ENCODE measurements at regions of chr2 and their contacts with region 1.

Region 1: DNA sequence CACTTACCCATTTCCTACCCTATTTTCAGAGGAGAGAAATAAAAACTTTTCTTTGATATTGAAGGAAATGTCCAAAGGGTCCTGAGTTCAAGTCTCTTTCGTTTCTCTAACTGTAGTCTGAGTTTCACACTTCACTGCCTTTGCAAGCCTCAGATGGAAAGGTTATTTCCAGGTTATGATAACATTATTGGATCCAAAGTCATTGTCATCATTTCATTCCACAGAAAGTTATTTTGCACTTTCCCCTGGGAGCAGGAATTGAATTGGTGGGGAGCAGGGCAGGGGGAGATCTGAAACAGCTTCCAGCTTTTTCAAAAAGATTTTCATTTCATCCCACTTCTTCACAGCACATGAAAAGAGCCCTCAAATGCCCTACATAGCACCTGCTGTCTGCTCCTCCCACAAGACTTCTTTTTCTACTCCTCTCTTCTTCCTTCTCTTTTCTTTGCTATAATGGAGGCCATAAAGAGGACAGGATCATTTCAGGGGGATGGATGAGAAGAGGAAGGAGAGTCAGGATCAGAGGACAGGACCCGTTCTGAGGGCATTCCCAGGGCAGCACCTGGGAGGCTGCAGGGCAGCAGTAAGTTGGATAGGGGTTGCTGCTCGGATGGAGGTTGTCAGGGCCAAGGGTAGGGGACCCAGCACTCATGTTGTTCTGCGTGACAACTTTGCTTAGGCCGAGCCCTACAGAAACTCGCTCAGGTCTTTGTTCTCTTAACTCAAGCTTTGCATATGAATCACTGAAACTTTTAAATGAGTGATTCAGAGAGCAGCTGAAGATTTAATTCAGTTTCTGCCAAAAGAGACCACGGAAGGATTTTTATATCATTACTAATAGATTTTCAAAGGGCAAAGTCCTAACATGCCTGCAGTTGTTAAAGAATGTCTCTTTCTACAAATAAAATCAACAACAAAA is 11.4 kb upstream of the GALNT5 start:
- DNase-seq: no peak
- H3K4me3 Mint-ChIP-seq: no peak overlapping the region
- H3K27ac Mint-ChIP-seq: peak overlapping the region; percentile 5
- H3K4me1 Mint-ChIP-seq: peaks cover 10% of the 10 kb centered on the region
- H3K27me3 Mint-ChIP-seq: peaks cover 10% of the 10 kb centered on the region

Region 2: DNA sequence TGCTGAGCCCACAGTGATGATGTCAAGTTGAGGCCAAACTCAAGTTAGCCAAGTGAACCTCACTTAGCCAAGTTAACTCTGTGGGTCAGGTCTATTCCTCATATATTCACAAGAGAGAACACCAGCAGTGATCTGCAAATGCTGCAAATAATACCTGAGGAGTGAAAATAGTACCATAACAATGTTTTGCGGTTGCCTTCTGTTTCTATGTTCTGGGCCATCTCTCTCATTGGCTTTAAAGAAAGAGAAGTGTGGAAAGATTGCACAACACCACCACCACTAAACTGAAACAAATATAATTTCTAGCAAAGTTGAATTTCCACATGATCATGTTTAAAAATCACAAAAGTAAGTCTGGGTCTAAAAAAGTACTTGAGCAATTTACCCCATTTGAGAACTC is 199.7 kb before region 1 on chr2:
- intact Hi-C with region 1: no loop called
- DNase-seq: no peak
- H3K4me3 Mint-ChIP-seq: no peak overlapping the region
- H3K27ac Mint-ChIP-seq: no peak overlapping the region
- H3K4me1 Mint-ChIP-seq: no peaks in the 10 kb centered on the region
- H3K27me3 Mint-ChIP-seq: peaks cover 4% of the 10 kb centered on the region

Region 3: GRCh38 chr2:157271590-157272203 is 25.6 kb after region 1 on chr2:
- intact Hi-C with region 1: loop called (anchors 1 kb)
- DNase-seq: no peak
- H3K4me3 Mint-ChIP-seq: no peak overlapping the region
- H3K27ac Mint-ChIP-seq: peak overlapping the region; percentile 0
- H3K4me1 Mint-ChIP-seq: peaks cover 16% of the 10 kb centered on the region
- H3K27me3 Mint-ChIP-seq: peaks cover 10% of the 10 kb centered on the region